PC-3 (cell line): ENCODE measurements at regions of chr17 and their contacts with region 1.

Region 1: DNA sequence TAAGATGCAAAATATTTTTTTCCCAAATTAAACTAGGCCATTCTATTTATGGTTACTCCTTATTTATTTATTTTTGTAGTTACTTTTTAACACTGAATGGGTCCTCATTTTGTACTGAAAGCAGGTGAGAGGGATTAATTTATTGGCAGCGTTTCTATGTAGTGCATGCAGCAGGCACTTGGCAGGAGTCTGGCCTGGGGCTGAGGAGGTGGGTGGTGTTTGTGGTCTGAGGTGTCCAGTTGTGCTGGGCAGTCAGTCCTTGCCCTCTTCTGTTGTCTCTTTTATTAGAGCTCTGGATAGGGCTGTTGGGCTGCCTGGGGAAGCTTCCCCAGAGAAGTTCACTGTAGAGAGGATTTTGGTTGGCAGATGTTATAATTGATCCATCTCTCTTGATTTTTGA is 12.7 kb downstream of the SEC14L1 start:
- DNase-seq: no peak
- ATAC-seq: peak; percentile 57
- H3K4me3 ChIP-seq: no peak overlapping the region
- H3K27ac ChIP-seq: no peak overlapping the region
- H3K4me1 ChIP-seq: no peaks in the 10 kb centered on the region
- H3K27me3 ChIP-seq: no peaks in the 10 kb centered on the region
- CTCF ChIP-seq: no peak

Region 2: GRCh38 chr17:77034677-77035424 is 118.6 kb before region 1 on chr17:
- CTCF ChIA-PET with region 1: no interaction called
- POLR2A ChIA-PET with region 1: no interaction called
- intact Hi-C with region 1: no loop called
- DNase-seq: no peak
- ATAC-seq: no peak
- H3K4me3 ChIP-seq: no peak overlapping the region
- H3K27ac ChIP-seq: no peak overlapping the region
- H3K4me1 ChIP-seq: no peaks in the 10 kb centered on the region
- H3K27me3 ChIP-seq: peaks cover 9% of the 10 kb centered on the region; the same call in 1 of the 2 replicates
- CTCF ChIP-seq: no peak

Region 3: GRCh38 chr17:77186141-77186604 is 32.7 kb after region 1 on chr17:
- CTCF ChIA-PET with region 1: no interaction called
- POLR2A ChIA-PET with region 1: no interaction called
- intact Hi-C with region 1: loop called (anchors 5 kb)
- DNase-seq: no peak
- ATAC-seq: no peak
- H3K4me3 ChIP-seq: no peak overlapping the region
- H3K27ac ChIP-seq: no peak overlapping the region
- H3K4me1 ChIP-seq: peaks cover 11% of the 10 kb centered on the region
- H3K27me3 ChIP-seq: no peaks in the 10 kb centered on the region
- CTCF ChIP-seq: no peak